Naive thymus-derived CD4-positive, alpha-beta T cell (primary cell): ENCODE measurements at regions of chr20 and their contacts with region 1.

Region 1: GRCh38 chr20:32207626-32208498 is at the starts of genes PLAGL2 and POFUT1:
- DNase-seq: peak; percentile 82 to 96 (median 88)
- ATAC-seq: peak; percentile 99
- H3K4me3 ChIP-seq: peak within 1 kb of the TSS; percentile 94
- H3K4me3 Mint-ChIP-seq: peak within 1 kb of the TSS; percentile 90 to 100 (median 96)
- H3K27ac ChIP-seq: peak within 1 kb of the TSS; percentile 91
- H3K27ac Mint-ChIP-seq: peak within 1 kb of the TSS; percentile 89 to 95 (median 92)
- H3K4me1 ChIP-seq: peaks cover 23 to 35% of the 10 kb centered on the region in 2 donors
- H3K4me1 Mint-ChIP-seq: peaks cover 66 to 83% (median 77%) of the 10 kb centered on the region in 7 donors
- H3K27me3 ChIP-seq: no peaks in the 10 kb centered on the region
- H3K27me3 Mint-ChIP-seq: no peaks in the 10 kb centered on the region
- total RNA-seq, gene PLAGL2: 15.6 to 30.1 (median 17.6) TPM
- total RNA-seq, gene POFUT1: 12.5 to 32.2 (median 19.7) TPM

Region 2: DNA sequence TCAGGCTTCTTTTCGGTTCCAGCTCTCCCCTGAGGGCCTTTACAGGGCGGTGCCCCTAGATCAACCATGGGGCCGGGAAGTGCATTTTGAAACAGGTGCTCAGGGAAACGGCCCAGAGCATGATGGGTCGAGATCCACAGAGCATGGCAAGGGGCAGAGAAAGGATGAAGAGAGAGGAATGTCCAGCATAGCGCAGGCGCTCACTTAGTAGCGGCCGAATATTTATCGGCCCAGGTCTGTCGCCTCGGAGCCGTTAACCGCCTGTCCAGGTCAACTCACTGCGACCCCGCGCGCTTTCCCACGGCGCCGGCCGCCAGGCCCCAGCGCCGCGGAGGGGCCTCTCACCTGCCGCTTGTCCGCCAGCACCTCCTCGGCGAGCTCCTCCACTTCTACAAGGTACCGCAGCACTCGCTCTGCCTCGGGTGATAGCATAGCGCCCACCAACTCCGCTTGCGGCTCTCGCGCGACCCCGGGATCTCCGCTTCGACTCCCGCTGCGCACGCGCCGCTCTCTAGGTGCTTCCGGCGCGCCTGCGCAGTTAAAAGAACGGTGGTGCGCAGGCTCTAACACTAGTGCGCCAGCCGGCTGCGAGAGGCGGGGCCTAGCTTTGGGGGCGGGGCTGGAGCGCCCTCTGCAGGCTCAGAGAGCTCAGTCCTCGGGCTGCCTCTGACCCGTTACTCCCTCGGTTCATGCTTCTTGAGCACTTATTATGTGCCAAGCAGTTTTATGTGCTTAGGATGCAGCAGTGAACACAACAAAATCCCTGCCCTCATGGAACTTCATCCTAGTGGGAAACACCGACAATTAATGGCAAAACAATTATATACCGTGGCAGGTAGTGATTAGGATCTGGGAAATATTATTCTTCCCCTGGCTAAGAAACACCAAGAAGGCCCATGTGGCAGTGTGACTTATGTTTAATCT is 256.1 kb before region 1 on chr20 and contains the start of gene PDRG1:
- CTCF ChIA-PET with region 1: no interaction called
- POLR2A ChIA-PET with region 1: no interaction called
- intact Hi-C with region 1: loop called in 1 of 2 experiments (anchors 2 kb)
- DNase-seq: peak; percentile 92 to 99 (median 97)
- ATAC-seq: peak; percentile 100
- H3K4me3 ChIP-seq: peak within 1 kb of the TSS; percentile 90
- H3K4me3 Mint-ChIP-seq: peak within 1 kb of the TSS; percentile 90 to 100 (median 98)
- H3K27ac ChIP-seq: peak within 1 kb of the TSS; percentile 76
- H3K27ac Mint-ChIP-seq: peak within 1 kb of the TSS; percentile 88 to 99 (median 96)
- H3K4me1 ChIP-seq: peaks cover 6 to 12% of the 10 kb centered on the region in 2 donors
- H3K4me1 Mint-ChIP-seq: peaks cover 17 to 37% (median 35%) of the 10 kb centered on the region in 7 donors
- H3K27me3 ChIP-seq: no peaks in the 10 kb centered on the region
- H3K27me3 Mint-ChIP-seq: peaks cover 9 to 17% (median 13%) of the 10 kb centered on the region in 5 donors
- total RNA-seq, gene PDRG1: 7.5 to 13.6 (median 11.4) TPM

Region 3: DNA sequence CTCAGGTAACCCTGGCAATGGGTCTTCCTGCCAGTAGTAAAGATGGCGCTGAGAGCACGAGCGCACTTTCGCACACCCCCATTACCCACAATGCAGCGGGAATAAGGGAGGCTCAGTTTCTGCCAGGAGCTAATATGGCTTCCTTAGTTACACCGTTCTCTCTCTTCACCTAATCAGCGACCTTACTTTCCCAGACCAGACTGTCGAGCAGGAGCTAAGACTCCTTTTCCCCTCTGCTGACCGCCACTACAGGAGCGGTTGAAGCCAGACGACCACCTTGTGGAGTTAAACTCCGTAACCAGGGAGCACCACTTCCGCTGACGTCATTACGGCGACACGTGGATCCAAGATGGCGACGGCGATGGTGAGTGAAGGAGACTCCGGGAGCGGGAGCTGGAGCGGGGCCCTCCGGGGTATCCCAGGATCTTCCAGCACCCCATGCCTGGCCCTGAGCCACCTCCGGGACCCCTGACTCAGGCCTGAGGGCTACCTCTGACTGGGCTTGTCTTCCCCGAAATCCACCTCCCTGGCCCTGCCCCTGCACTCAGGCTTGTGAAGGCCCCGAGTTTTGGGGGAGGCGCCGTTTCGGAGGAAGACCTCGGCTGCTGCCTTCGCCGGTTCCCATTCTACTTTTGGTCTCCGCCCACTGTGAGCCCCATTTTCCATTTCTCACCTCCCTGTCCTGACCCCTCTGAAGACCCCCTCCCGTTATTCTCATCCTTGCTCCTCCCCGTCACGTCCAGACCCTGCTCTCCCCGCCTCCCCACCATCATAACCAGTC is 98.3 kb before region 1 on chr20 and contains the start of gene TM9SF4:
- CTCF ChIA-PET with region 1: no interaction called
- POLR2A ChIA-PET with region 1: no interaction called
- intact Hi-C with region 1: loop called in 1 of 2 experiments (anchors 1 kb)
- DNase-seq: peak; percentile 87 to 96 (median 93)
- ATAC-seq: peak; percentile 92
- H3K4me3 ChIP-seq: peak within 1 kb of the TSS; percentile 92
- H3K4me3 Mint-ChIP-seq: peak within 1 kb of the TSS; percentile 78 to 100 (median 96)
- H3K27ac ChIP-seq: peak within 1 kb of the TSS; percentile 94
- H3K27ac Mint-ChIP-seq: peak within 1 kb of the TSS; percentile 95 to 100 (median 100)
- H3K4me1 ChIP-seq: peaks cover 11% of the 10 kb centered on the region in 2 donors
- H3K4me1 Mint-ChIP-seq: peaks cover 26 to 44% (median 39%) of the 10 kb centered on the region in 7 donors
- H3K27me3 ChIP-seq: no peaks in the 10 kb centered on the region
- H3K27me3 Mint-ChIP-seq: no peaks in the 10 kb centered on the region
- total RNA-seq, gene TM9SF4: 35.2 to 61.0 (median 41.5) TPM

Region 4: GRCh38 chr20:32231847-32232246 is 24.0 kb after region 1 on chr20:
- CTCF ChIA-PET with region 1: interaction called, 3 read pairs
- POLR2A ChIA-PET with region 1: no interaction called
- intact Hi-C with region 1: loop called (anchors 1 kb)
- DNase-seq: peak in 7 of 9 donors; percentile 11 to 46 (median 42)
- ATAC-seq: peak; percentile 85
- H3K4me3 ChIP-seq: no peak overlapping the region
- H3K4me3 Mint-ChIP-seq: peak overlapping the region in 5 of 10 donors; percentile 1 to 56 (median 48)
- H3K27ac ChIP-seq: peak overlapping the region; percentile 25
- H3K27ac Mint-ChIP-seq: peak overlapping the region; percentile 30 to 95 (median 90)
- H3K4me1 ChIP-seq: peaks cover 10 to 12% of the 10 kb centered on the region in 2 donors
- H3K4me1 Mint-ChIP-seq: peaks cover 14 to 30% (median 21%) of the 10 kb centered on the region in 7 donors
- H3K27me3 ChIP-seq: no peaks in the 10 kb centered on the region
- H3K27me3 Mint-ChIP-seq: no peaks in the 10 kb centered on the region

Region 5: GRCh38 chr20:32277361-32278198 is 69.7 kb after region 1 on chr20 and contains the start of gene KIF3B:
- CTCF ChIA-PET with region 1: no interaction called
- POLR2A ChIA-PET with region 1: no interaction called
- intact Hi-C with region 1: loop called (anchors 1 kb)
- DNase-seq: peak; percentile 62 to 87 (median 85)
- ATAC-seq: peak; percentile 95
- H3K4me3 ChIP-seq: peak within 1 kb of the TSS; percentile 82
- H3K4me3 Mint-ChIP-seq: peak within 1 kb of the TSS; percentile 85 to 93 (median 88)
- H3K27ac ChIP-seq: peak within 1 kb of the TSS; percentile 88
- H3K27ac Mint-ChIP-seq: peak within 1 kb of the TSS; percentile 78 to 97 (median 88)
- H3K4me1 ChIP-seq: peaks cover 9 to 13% of the 10 kb centered on the region in 2 donors
- H3K4me1 Mint-ChIP-seq: peaks cover 24 to 51% (median 39%) of the 10 kb centered on the region in 7 donors
- H3K27me3 ChIP-seq: no peaks in the 10 kb centered on the region
- H3K27me3 Mint-ChIP-seq: no peaks in the 10 kb centered on the region
- total RNA-seq, gene KIF3B: 9.3 to 19.5 (median 11.5) TPM

Region 6: GRCh38 chr20:32737371-32738223 is 529.7 kb after region 1 on chr20:
- CTCF ChIA-PET with region 1: no interaction called
- POLR2A ChIA-PET with region 1: no interaction called
- intact Hi-C with region 1: loop called in 1 of 2 experiments (anchors 10 kb)
- DNase-seq: peak in 8 of 9 donors; percentile 33 to 78 (median 64)
- ATAC-seq: peak; percentile 88
- H3K4me3 ChIP-seq: peak overlapping the region; percentile 47
- H3K4me3 Mint-ChIP-seq: peak overlapping the region; percentile 50 to 78 (median 62)
- H3K27ac ChIP-seq: peak overlapping the region; percentile 75
- H3K27ac Mint-ChIP-seq: peak overlapping the region; percentile 82 to 95 (median 91)
- H3K4me1 ChIP-seq: peaks cover 36 to 37% of the 10 kb centered on the region in 2 donors
- H3K4me1 Mint-ChIP-seq: peaks cover 13 to 65% (median 52%) of the 10 kb centered on the region in 7 donors
- H3K27me3 ChIP-seq: no peaks in the 10 kb centered on the region
- H3K27me3 Mint-ChIP-seq: no peaks in the 10 kb centered on the region